ENCODE measurements at regions of chr15 and their contacts with region 1.

Region 1: GRCh38 chr15:62549345-62549970 is 384.4 kb upstream of the C2CD4B start:
- DNase-seq: peak; percentile 71 to 76
- ATAC-seq: peak; percentile 79 to 94
- H3K4me3 ChIP-seq: no peak overlapping the region
- H3K27ac ChIP-seq: no peak overlapping the region
- H3K4me1 ChIP-seq: peaks cover 6% of the 10 kb centered on the region; the same call in 1 of the 3 replicates
- CTCF ChIP-seq: peak; percentile 50
- EP300 ChIP-seq: no peak
- POLR2A ChIP-seq: no peak
- RAD21 ChIP-seq: peak; percentile 55 to 75

Region 2: GRCh38 chr15:62539236-62539635 is 10.2 kb before region 1 on chr15:
- CTCF ChIA-PET with region 1: interaction called, 10 read pairs
- POLR2A ChIA-PET with region 1: no interaction called
- DNase-seq: no peak
- ATAC-seq: no peak
- H3K4me3 ChIP-seq: no peak overlapping the region
- H3K27ac ChIP-seq: no peak overlapping the region
- H3K4me1 ChIP-seq: no peaks in the 10 kb centered on the region
- CTCF ChIP-seq: no peak
- EP300 ChIP-seq: no peak
- POLR2A ChIP-seq: no peak
- RAD21 ChIP-seq: no peak

Region 3: DNA sequence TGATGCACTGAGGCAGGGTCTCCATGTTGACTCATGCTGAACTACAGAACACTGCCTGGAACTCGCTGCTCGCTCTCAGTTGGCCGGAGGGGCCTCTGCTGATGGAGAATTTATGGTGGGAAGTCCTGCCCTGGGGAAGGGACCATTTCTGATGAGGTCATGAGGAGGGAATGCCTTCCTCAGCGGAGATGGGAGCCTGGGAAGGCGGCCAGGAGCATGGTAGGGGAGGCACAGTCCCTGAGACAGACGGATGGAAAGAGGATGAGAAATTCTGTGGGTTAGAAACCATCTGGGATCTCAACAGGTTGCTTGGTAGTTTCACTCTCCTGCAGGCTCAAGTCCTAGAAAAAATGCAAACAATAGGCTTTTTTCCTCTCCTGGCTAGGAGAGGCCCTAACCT is 436.3 kb after region 1 on chr15:
- CTCF ChIA-PET with region 1: no interaction called
- POLR2A ChIA-PET with region 1: no interaction called
- DNase-seq: no peak
- ATAC-seq: no peak
- H3K4me3 ChIP-seq: no peak overlapping the region
- H3K27ac ChIP-seq: no peak overlapping the region
- H3K4me1 ChIP-seq: peaks cover 9% of the 10 kb centered on the region
- CTCF ChIP-seq: no peak
- EP300 ChIP-seq: no peak
- POLR2A ChIP-seq: no peak
- RAD21 ChIP-seq: no peak